AG04449 (cell line): ENCODE measurements at regions of chr2 and their contacts with region 1.

Region 1: DNA sequence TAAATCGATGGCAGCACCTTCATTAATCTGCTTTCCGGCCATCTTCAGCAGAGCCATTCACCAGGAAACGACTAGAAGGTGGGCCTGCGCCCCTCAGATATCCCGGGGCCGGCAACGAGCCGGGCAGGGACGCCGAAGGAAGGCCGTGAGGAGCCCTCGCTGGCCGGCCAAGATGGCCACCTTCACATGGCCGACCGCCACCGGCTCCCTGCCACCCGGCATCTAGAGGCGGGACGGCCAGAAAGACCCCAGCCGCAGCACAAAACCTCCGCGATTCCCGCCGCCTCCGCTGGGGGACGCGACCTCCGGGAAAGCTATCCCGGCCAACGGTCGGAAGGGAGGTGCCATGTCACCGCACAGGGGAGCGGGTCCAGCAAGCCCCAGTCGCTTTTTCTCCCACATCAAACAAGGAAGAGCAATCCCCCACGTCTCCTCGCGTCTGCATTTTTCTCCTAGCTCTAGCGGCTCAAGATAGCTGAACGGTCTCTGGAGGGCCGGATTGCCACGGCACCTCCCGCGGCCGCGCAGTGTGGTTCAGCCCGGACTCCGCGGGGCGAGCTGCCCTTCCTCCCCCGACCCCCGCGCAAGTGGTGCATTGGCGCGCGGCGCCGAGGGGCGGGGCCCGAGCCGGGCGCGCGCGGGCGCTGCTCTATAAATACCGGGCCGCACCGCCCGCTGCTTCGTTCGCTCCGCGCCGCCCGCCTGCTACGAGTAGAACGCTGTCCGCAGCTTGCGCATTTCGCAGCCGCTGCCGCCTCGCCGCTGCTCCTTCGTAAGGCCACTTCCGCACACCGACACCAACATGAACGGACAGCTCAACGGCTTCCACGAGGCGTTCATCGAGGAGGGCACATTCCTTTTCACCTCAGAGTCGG is at the start of gene MAT2A:
- DNase-seq: peak; percentile 47
- H3K4me3 ChIP-seq: peak within 1 kb of the TSS; percentile 99
- CTCF ChIP-seq: peak; percentile 87

Region 2: GRCh38 chr2:85354286-85355072 is 184.2 kb before region 1 on chr2 and contains the starts of genes ELMOD3 and RETSAT:
- CTCF ChIA-PET with region 1: interaction called, 3 read pairs
- POLR2A ChIA-PET with region 1: interaction called, 27 read pairs
- DNase-seq: peak; percentile 97
- H3K4me3 ChIP-seq: peak within 1 kb of the TSS; percentile 91
- CTCF ChIP-seq: no peak

Region 3: GRCh38 chr2:85420536-85421259 is 118.0 kb before region 1 on chr2:
- CTCF ChIA-PET with region 1: interaction called, 922 read pairs
- POLR2A ChIA-PET with region 1: interaction called, 103 read pairs
- DNase-seq: no peak
- H3K4me3 ChIP-seq: no peak overlapping the region
- CTCF ChIP-seq: peak; percentile 98

Region 4: GRCh38 chr2:85437488-85438284 is 101.0 kb before region 1 on chr2:
- CTCF ChIA-PET with region 1: interaction called, 922 read pairs
- POLR2A ChIA-PET with region 1: interaction called, 47 read pairs
- DNase-seq: no peak
- H3K4me3 ChIP-seq: peak overlapping the region; percentile 45
- CTCF ChIP-seq: no peak

Region 5: GRCh38 chr2:85504778-85505323 is 33.9 kb before region 1 on chr2:
- CTCF ChIA-PET with region 1: interaction called, 7 read pairs
- POLR2A ChIA-PET with region 1: interaction called, 81 read pairs
- DNase-seq: peak; percentile 81
- H3K4me3 ChIP-seq: no peak overlapping the region
- CTCF ChIP-seq: no peak

Region 6: GRCh38 chr2:85524336-85524933 is 14.3 kb before region 1 on chr2:
- CTCF ChIA-PET with region 1: interaction called, 5 read pairs
- POLR2A ChIA-PET with region 1: interaction called, 12 read pairs
- DNase-seq: no peak
- H3K4me3 ChIP-seq: no peak overlapping the region
- CTCF ChIP-seq: no peak

Region 7: DNA sequence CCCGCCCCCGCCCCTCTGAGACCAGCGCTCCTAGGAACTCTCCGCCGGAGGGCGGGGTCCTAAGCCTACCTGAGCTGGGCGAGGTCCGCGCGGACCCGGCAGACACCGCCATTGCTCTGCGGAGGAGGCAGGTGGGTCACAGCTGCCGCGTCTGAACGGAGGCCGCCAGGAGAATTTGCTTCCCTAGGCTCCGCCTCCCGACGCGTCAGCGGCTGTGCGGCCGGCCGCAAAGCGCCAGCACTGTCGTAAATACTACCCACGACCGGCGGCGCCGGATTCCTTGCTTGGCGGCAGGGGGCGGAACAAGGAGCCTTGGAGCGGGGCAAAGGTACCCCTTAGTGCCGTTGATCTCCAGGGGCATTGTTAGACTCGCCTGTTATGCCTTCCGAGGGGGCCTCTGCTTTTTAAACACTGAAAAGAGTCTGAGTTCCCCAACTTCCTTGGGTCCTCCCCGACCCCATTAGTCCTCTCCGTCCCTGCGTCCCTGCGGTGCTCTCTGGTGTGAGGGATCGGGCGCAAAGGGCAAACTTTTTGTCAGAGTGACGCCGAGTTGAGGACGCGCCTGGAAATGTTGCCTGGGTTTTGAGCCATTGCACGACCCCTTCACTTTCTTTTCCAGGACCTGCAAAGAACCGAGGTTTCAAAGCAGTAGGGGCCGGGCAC is 22.7 kb after region 1 on chr2 and contains the start of gene GGCX:
- CTCF ChIA-PET with region 1: interaction called, 3 read pairs
- POLR2A ChIA-PET with region 1: interaction called, 17 read pairs
- DNase-seq: no peak
- H3K4me3 ChIP-seq: peak within 1 kb of the TSS; percentile 92
- CTCF ChIP-seq: no peak